ENCODE measurements at regions of chr9 and their contacts with region 1.

Region 1: DNA sequence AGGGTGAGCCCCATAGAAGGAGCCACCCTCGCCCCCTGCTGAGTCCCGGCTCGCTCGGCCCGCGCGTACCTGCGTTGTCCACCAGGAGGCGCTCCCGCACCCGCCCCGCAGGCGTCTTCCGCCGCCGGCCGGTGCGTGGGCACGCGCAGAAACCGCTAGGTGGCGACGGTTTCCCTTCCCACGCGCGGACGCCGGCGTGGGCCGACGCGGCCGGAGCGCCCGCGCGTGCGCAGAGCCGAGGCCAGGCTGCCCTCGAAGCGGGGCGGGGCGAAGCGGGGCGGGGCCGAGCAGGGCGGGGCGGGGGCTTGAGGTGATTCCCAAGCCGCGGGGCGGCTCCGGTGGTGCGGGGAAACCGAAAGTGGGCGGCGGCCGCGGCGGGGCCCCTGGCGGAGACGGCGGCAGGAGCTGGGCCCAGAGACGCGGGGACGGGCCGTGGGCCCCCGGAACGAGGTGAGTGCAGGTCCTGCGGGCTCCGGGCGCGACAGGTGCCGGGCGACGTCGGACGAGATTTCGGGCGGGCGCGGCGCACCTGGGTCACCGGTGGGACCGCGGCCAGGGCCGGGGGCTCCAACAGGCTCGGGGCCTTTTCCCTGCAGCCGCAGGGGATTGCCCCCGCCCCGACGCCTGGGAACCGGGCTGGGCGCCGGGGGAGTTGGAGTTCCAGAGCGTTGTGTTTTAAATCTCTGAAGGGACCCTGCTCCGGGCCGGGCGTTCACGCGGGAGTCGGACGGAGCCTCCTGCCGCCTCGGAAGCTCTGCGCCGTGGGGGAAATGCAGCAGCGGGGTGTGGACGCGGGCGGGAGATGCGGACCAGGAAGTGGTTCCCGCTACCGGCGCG is at the start of gene TDRD7:
- DNase-seq: peak; percentile 91
- H3K4me3 ChIP-seq: peak within 1 kb of the TSS; percentile 84 to 100 (median 94)
- H3K27ac ChIP-seq: peak within 1 kb of the TSS; percentile 87 to 91 (median 91)
- H3K4me1 ChIP-seq: peaks cover 0 to 15% (median 8%) of the 10 kb centered on the region in 4 donors
- H3K27me3 ChIP-seq: peaks cover 0 to 4% (median 0%) of the 10 kb centered on the region in 3 donors
- CTCF ChIP-seq: peak; percentile 87 to 99 (median 93)
- EP300 ChIP-seq: no peak
- POLR2A ChIP-seq: no peak
- total RNA-seq, gene TDRD7: 10.5 to 20.9 (median 15.3) TPM

Region 2: GRCh38 chr9:97237951-97238851 is 173.8 kb before region 1 on chr9:
- intact Hi-C with region 1: loop called (anchors 5 kb)
- DNase-seq: peak; percentile 90
- H3K4me3 ChIP-seq: peak overlapping the region; percentile 48 to 76 (median 60)
- H3K27ac ChIP-seq: peak overlapping the region; percentile 79 to 86 (median 80)
- H3K4me1 ChIP-seq: peaks cover 0 to 13% (median 9%) of the 10 kb centered on the region in 4 donors
- H3K27me3 ChIP-seq: no peaks in the 10 kb centered on the region
- CTCF ChIP-seq: no peak
- EP300 ChIP-seq: peak in 1 of 4 donors; percentile 4
- POLR2A ChIP-seq: no peak

Region 3: GRCh38 chr9:97475059-97475458 is 63.1 kb after region 1 on chr9:
- intact Hi-C with region 1: no loop called
- DNase-seq: no peak
- H3K4me3 ChIP-seq: no peak overlapping the region
- H3K27ac ChIP-seq: no peak overlapping the region
- H3K4me1 ChIP-seq: peaks cover 0 to 2% (median under 1%) of the 10 kb centered on the region in 4 donors
- H3K27me3 ChIP-seq: no peaks in the 10 kb centered on the region
- CTCF ChIP-seq: no peak
- EP300 ChIP-seq: no peak
- POLR2A ChIP-seq: no peak

Region 4: DNA sequence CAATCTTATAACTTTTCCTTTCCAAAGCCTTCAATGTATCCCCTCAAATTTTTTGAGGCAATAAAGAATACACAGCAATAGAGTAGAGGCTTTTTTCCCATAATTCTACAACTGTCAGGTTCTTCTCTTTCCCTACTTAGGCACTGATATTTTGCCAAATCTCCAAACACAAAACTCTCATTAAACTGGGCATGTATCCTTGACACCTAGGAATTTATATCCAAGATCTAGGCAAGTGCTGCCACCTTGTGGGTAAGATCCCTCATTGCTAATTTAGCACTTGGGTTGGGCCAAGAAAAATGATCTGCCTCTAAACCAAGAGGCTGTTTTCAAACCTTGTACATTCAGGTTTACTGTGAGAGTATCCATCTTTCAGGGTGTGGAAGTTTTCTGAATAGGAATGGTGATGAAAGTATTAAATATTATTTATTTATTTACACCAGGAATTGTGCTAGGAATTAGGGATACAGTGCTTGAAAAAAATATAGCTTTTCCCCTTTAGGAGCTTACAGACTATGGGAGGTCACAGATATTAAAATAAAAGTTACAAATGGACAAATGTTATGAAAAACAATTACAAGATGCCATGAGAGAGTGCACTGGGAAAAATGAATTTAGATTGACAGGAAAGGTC is 203.5 kb after region 1 on chr9:
- intact Hi-C with region 1: loop called (anchors 2 kb)
- DNase-seq: peak; percentile 81
- H3K4me3 ChIP-seq: no peak overlapping the region
- H3K27ac ChIP-seq: peak overlapping the region in 1 of 4 donors; percentile 13
- H3K4me1 ChIP-seq: peaks cover 0 to 11% (median 4%) of the 10 kb centered on the region in 4 donors
- H3K27me3 ChIP-seq: no peaks in the 10 kb centered on the region
- CTCF ChIP-seq: peak; percentile 69 to 84 (median 78)
- EP300 ChIP-seq: no peak
- POLR2A ChIP-seq: no peak